ENCODE measurements at regions of chr3 and their contacts with region 1.

Region 1: DNA sequence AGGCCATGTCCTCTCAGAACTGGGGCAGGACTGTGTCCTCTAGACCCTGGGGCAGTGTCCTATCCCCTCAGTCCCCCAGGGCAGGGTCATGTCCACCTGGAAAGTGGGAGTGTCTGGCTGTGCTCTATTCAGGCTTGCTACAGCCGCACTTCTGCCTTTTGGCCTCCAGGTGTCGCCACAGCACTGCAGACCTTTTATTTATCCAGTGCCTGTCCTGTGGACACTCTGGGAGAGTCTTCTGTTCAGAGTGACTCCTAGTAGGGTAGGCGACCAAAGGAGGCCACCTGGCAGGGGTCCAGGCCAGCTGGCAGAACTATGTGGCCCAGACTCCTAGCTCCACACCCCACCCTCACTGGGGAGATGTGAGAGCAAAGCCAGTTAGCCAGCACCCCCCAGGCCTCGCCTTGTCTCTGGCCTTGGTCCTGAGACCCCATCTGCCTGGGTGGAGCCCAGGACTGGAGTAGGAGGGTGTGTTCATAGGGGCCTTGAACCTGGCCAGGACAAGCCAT is 3.9 kb downstream of the TMIE start:
- DNase-seq: peak; percentile 59 to 89 (median 80)
- ATAC-seq: peak; percentile 86 to 94 (median 88)
- H3K4me3 ChIP-seq: no peak overlapping the region
- H3K27ac ChIP-seq: no peak overlapping the region
- H3K4me1 ChIP-seq: peaks cover 0 to 6% (median 0%) of the 10 kb centered on the region in 3 donors
- H3K27me3 ChIP-seq: no peaks in the 10 kb centered on the region
- CTCF ChIP-seq: peak; percentile 92 to 97 (median 94)

Region 2: GRCh38 chr3:46895204-46895660 is 190.2 kb after region 1 on chr3:
- intact Hi-C with region 1: loop called (anchors 5 to 10 kb)
- DNase-seq: peak; percentile 50 to 90 (median 74)
- ATAC-seq: peak; percentile 53 to 72 (median 66)
- H3K4me3 ChIP-seq: no peak overlapping the region
- H3K27ac ChIP-seq: no peak overlapping the region
- H3K4me1 ChIP-seq: peaks cover 0 to 3% (median 0%) of the 10 kb centered on the region in 3 donors
- H3K27me3 ChIP-seq: peaks cover 0 to 4% (median 0%) of the 10 kb centered on the region in 4 donors
- CTCF ChIP-seq: peak; percentile 52 to 78 (median 63)

Region 3: GRCh38 chr3:46909535-46910442 is 204.7 kb after region 1 on chr3:
- intact Hi-C with region 1: loop called in 1 of 3 experiments (anchors 10 kb)
- DNase-seq: peak; percentile 70 to 92 (median 82)
- ATAC-seq: peak; percentile 72 to 92 (median 87)
- H3K4me3 ChIP-seq: no peak overlapping the region
- H3K27ac ChIP-seq: no peak overlapping the region
- H3K4me1 ChIP-seq: peaks cover 0 to 6% (median 3%) of the 10 kb centered on the region in 3 donors
- H3K27me3 ChIP-seq: no peaks in the 10 kb centered on the region
- CTCF ChIP-seq: peak; percentile 64 to 82 (median 70)

Region 4: GRCh38 chr3:46987743-46988401 is 282.8 kb after region 1 on chr3:
- intact Hi-C with region 1: loop called in 1 of 3 experiments (anchors 10 kb)
- DNase-seq: peak in 3 of 6 donors; percentile 36 to 64 (median 54)
- ATAC-seq: peak in 3 of 4 donors; percentile 59 to 66 (median 60)
- H3K4me3 ChIP-seq: peak overlapping the region in 1 of 4 donors; percentile 7
- H3K27ac ChIP-seq: peak overlapping the region in 1 of 4 donors; percentile 12
- H3K4me1 ChIP-seq: no peaks in the 10 kb centered on the region
- H3K27me3 ChIP-seq: no peaks in the 10 kb centered on the region
- CTCF ChIP-seq: no peak

Measured in pancreas (tissue), 10 donors.